ENCODE measurements at regions of chr9 and their contacts with region 1.

Region 1: DNA sequence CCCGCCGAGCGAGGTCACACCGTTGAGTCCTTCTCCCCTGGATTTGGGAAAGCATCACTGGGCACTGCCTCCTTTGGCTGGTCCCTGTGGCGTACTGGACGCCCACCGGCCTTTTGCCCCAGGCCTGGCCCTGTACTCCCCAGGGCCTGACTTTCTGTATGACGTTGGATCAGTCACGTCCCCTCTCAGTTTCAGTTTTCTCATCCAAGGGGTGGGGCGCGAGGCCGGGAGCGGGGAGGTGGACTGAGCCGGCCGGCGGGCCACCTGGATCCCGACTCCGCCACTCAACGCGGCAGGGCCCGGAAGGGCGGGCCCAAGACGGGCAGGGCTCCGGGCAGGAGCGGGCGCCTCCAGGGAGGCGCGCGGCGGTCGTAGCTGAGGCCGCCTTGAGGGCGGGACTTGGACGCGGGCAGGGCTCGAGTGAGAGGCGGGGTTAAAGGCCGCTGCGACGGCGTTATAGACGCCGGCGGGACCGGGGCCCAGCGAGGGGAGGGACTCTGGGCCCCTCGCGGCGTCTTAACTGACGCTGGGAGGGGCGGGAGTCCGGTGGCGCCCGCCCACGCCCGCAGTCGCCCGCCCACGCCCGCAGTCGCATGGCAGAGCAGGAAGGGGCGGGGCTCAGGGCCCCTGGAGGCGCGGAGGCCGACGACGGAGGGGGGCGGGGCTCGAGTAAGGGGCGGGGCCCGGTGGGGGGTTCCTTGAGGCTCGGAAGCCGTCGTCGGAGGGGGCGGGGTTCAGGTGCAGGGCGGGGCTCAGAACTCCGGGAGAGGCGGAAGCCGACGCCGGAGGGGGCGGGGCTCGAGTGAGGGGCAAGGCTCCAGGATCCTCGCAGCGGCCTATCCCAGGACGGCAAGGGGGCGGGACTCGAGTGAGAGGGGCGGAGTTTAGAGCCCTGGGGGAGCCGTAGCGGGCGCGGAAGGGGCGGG is 549 bp upstream of the CARD19 start:
- DNase-seq: peak; percentile 99 to 100 (median 100)

Region 2: GRCh38 chr9:93134015-93134739 is 38.7 kb after region 1 on chr9 and contains the start of gene NINJ1:
- intact Hi-C with region 1: loop called (anchors 5 kb)
- DNase-seq: peak in 39 of 42 donors; percentile 37 to 84 (median 69)

Region 3: DNA sequence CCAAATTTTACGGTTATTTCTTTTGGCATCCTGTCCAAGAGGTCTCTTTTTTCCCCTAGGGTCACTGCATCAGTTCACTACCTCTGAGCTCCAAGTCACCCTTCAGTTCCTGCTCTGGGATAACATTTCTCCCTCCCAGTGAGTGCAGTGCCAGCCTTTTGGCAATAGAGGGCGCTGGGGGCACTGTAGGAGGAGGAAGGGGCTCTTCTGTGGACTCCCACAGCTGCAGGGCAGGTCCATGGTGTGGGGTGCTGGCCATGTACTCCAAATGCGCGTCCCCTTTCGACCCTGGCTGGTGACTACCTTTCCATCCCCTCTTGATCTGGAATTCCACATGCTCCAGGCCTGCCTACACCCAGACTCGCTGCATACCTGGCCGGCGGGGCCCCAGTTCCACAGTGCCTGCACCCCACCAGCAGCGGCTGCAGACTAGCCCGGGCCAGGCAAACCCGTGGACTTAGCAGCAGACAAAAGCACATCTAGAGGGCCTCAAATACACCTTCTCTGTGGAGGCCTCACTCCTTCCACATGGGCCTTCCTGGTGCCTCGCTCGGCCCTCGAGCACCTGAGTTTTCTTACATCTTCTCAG is 58.9 kb after region 1 on chr9:
- intact Hi-C with region 1: no loop called
- DNase-seq: peak in 21 of 42 donors; percentile 21 to 77 (median 50)

Region 4: DNA sequence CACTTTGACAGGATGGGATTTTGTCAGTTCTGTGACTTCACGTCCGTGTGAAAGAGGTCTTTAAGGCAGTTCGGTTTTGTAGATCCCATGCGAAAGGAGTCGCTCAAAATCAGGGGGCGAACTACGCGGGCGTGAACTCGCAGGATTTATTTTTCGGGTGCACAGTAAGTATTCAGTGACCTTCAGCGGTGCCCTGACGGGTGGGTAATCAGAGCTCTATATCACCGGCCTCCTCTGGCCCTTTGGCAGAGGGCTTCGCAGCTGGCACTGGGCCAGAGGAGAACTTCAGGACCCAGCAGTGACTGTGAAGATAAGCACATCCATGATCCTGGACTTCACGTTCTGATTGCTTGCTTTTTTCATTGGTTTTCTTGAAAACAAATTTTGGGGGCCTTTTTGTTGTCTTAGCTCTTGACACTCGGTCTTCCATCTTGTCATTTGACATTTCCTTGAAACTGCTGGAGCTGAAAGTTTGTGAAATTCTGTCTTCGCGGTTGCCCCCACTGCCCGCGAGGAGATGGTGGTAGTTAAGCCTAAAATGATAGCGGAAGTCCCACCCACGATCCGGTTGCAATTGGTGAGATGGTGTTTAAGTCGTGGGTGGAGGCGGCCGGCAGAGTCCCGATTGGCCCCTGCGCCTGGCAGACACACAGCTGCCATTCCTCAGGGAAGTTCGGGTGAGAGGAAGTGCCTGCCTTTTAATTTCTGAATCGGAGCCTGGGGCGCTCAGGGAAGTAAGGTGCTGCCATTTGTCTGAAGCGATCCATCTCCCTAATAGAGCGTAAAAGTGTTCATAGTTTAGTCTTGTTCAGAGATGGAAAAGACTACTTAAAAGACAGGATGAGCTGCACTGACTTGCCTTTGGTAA is 357.8 kb after region 1 on chr9 and contains the start of gene FAM120AOS:
- intact Hi-C with region 1: loop called (anchors 5 kb)
- DNase-seq: peak; percentile 91 to 98 (median 96)